CD8-positive, alpha-beta T cell (primary cell): ENCODE measurements at regions of chr10 and their contacts with region 1.

Region 1: DNA sequence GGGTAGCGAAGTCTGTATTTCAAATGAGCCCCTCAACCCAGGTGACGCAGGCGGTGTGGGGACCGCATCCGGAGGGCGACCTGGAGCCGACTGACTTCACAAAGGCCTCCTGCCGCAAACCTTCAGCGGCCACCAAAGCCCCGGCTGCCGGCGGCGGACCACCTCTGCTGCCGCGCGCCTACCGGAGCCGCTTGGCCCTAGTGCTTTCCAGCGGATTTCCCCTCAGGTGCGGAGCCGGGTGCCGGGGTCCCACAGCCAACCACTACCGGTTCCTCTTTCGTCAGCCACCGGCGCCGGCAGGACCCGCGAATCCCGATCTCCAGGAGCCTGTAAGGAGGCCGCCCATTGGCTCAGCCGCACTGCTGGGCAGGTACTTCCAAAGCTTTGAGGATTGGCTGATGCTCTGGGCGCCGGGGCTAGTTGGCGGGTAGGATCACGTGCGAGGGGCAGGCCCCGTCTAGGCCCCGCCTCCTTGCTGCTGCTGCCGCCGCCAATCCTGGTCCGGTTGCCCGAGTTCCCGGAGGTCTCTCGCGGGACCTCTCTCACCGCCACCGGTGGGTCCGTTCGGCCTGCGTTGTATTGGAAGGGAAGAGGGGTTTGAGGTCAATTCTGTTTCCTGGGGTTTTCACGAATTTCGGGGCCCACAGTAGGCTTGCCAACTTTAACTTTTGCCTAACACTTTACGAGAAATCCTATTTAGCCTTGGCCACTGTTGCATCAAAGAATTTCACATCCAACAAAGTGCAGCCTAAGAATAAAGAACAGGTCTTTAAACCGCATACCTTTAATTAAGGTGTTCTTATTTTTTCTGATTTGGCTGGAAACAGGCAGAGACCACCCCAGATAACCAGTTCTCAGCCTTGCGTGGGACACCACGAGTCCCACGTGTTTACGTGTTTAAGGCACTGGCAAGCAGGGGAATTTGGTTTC is at the start of gene GSTO2:
- DNase-seq: peak; percentile 94 to 99 (median 97)
- ATAC-seq: peak; percentile 89
- H3K4me3 ChIP-seq: peak within 1 kb of the TSS; percentile 81 to 82
- H3K4me3 Mint-ChIP-seq: peak within 1 kb of the TSS; percentile 94
- H3K27ac ChIP-seq: peak within 1 kb of the TSS; percentile 90 to 93
- H3K27ac Mint-ChIP-seq: peak within 1 kb of the TSS; percentile 96
- H3K4me1 ChIP-seq: peaks cover 26% of the 10 kb centered on the region
- H3K4me1 Mint-ChIP-seq: peaks cover 48% of the 10 kb centered on the region
- H3K27me3 ChIP-seq: no peaks in the 10 kb centered on the region
- H3K27me3 Mint-ChIP-seq: peaks cover 1% of the 10 kb centered on the region
- CTCF ChIP-seq: no peak
- total RNA-seq, gene GSTO2: 0.49 to 0.75 TPM

Region 2: DNA sequence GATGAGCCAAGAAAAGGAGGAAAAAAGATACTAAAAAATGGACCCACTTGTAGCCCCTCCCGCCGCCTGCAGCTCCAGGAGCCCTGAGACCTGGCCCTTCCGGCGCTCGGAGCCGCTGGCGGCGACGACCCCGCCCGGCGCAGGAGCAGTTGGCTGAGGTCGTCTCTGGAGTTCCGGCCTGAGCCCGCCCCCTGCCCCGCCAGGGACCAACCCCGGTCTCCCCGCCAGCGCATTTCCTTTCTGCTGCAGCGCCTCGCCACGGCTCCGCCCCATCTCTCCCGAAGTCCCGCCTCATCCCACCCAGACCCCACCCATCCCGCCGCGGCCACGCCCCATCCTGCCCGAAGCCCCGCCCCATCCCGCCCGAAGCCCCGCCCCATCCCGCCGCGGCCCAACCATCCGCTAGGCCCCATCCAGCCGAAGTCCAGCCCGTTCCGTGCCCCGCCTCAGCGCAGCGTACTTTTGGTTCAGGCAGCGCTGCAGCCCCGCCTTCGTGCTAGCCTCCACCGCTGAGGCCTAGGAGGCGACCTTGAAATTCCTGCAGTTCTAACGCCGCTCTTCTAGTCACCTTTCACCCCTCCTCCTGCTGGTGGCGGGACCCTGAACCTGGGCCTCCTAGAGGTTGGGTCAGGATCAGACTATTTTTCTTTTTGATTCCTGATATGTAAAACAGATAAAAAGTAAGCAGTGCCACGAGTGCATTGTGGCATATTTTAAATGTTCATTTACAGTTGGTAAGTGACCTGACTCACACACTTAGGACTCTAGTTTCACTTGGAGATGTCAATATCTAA is 350.7 kb before region 1 on chr10 and contains the start of gene STN1:
- CTCF ChIA-PET with region 1: no interaction called
- POLR2A ChIA-PET with region 1: no interaction called
- intact Hi-C with region 1: loop called in 1 of 2 experiments (anchors 1 kb)
- DNase-seq: peak; percentile 85 to 98 (median 95)
- ATAC-seq: peak; percentile 92
- H3K4me3 ChIP-seq: peak within 1 kb of the TSS; percentile 85 to 86
- H3K4me3 Mint-ChIP-seq: peak within 1 kb of the TSS; percentile 98
- H3K27ac ChIP-seq: peak within 1 kb of the TSS; percentile 79 to 88
- H3K27ac Mint-ChIP-seq: peak within 1 kb of the TSS; percentile 97
- H3K4me1 ChIP-seq: peaks cover 36% of the 10 kb centered on the region
- H3K4me1 Mint-ChIP-seq: peaks cover 40% of the 10 kb centered on the region
- H3K27me3 ChIP-seq: no peaks in the 10 kb centered on the region
- H3K27me3 Mint-ChIP-seq: no peaks in the 10 kb centered on the region
- CTCF ChIP-seq: no peak
- total RNA-seq, gene STN1: 14.2 to 14.8 TPM

Region 3: DNA sequence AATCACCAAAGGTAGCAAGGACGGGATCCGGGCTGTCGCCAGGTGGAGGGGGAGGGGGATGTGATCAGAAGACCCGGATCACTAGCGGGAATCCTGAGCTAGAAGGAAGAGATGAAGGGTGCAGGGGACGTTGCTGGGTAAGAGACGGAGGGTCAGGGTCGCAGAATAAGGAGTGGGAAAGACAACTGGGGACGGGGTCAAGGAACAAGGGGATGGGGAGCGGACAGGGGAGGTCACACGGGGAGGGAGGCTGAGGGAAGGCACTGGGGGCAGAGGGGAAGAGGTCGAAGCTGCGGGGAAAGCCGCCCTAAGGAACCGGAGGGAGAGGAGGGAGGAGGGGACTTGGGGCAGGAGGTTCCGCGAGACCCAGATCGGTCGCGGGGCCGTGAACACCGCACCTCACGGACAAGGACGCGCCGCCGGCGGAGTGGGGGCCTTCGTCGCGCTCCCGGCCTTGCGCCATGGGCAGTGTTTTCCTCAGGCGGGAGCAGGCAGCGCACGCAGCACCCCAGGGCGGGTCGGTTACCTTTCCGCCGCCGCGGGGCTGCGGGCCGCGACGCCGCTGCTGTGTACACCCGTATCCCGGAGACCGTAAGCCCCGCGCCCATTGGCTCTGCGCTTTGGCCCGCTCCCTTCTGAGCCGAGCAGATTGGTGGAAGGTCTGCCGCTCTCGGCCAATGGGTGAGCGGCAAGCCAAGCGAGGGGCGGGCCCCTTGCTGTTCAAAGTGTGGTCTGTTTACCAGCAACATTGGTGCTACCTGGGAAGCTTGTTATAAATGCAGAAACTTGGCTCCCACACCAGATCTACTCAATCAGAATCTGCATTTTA is 37.0 kb before region 1 on chr10 and contains the start of gene CFAP43:
- CTCF ChIA-PET with region 1: interaction called, 11 read pairs
- POLR2A ChIA-PET with region 1: interaction called, 4 read pairs
- intact Hi-C with region 1: loop called (anchors 1 kb)
- DNase-seq: peak; percentile 98 to 100 (median 99)
- ATAC-seq: peak; percentile 99
- H3K4me3 ChIP-seq: peak within 1 kb of the TSS; percentile 64 to 67
- H3K4me3 Mint-ChIP-seq: peak within 1 kb of the TSS; percentile 87
- H3K27ac ChIP-seq: peak within 1 kb of the TSS in 1 of 2 experiments; percentile 52
- H3K27ac Mint-ChIP-seq: peak within 1 kb of the TSS; percentile 79
- H3K4me1 ChIP-seq: peaks cover 4% of the 10 kb centered on the region
- H3K4me1 Mint-ChIP-seq: peaks cover 10% of the 10 kb centered on the region
- H3K27me3 ChIP-seq: peaks cover 0 to 10% of the 10 kb centered on the region in 2 experiments
- H3K27me3 Mint-ChIP-seq: peaks cover 9% of the 10 kb centered on the region
- CTCF ChIP-seq: no peak
- total RNA-seq, gene CFAP43: not detected

Region 4: DNA sequence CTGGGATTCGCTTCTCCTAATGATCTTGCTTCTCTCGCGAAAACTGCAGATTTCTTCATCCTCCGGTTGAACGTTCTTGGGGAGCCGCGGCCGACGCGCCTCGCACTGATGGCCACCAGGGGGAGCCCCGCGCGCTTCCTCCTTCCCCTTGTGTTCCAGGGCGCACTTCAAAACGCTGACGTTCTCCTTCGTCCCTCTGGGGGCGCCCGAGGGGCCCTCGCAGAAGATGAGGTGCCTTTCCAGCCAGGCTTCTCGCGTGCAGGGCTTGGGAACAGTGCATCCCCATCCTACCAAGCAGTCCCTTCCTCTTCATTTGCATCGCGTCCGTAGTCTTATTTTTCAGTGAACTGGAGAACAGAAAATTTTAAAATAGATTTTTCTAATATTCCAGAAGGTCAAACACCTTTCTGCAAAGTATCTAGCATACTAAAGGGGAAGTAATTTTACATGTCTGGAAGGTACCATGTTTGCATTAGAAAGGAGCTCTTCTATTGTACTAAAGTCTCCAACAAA is 22.5 kb after region 1 on chr10:
- CTCF ChIA-PET with region 1: interaction called, 109 read pairs
- POLR2A ChIA-PET with region 1: interaction called, 4 read pairs
- intact Hi-C with region 1: loop called in 1 of 2 experiments (anchors 1 kb)
- DNase-seq: peak; percentile 80 to 93 (median 89)
- ATAC-seq: peak; percentile 100
- H3K4me3 ChIP-seq: no peak overlapping the region
- H3K4me3 Mint-ChIP-seq: no peak overlapping the region
- H3K27ac ChIP-seq: no peak overlapping the region
- H3K27ac Mint-ChIP-seq: no peak overlapping the region
- H3K4me1 ChIP-seq: peaks cover 3% of the 10 kb centered on the region
- H3K4me1 Mint-ChIP-seq: peaks cover 5% of the 10 kb centered on the region
- H3K27me3 ChIP-seq: no peaks in the 10 kb centered on the region
- H3K27me3 Mint-ChIP-seq: peaks cover 20% of the 10 kb centered on the region
- CTCF ChIP-seq: peak; percentile 99

Region 5: GRCh38 chr10:104337974-104338735 is 69.2 kb after region 1 on chr10 and contains the start of gene ITPRIP:
- CTCF ChIA-PET with region 1: interaction called, 15 read pairs
- POLR2A ChIA-PET with region 1: interaction called, 14 read pairs
- intact Hi-C with region 1: loop called (anchors 1 kb)
- DNase-seq: peak; percentile 47 to 89 (median 76)
- ATAC-seq: peak; percentile 67
- H3K4me3 ChIP-seq: peak within 1 kb of the TSS; percentile 92 to 98
- H3K4me3 Mint-ChIP-seq: peak within 1 kb of the TSS; percentile 93
- H3K27ac ChIP-seq: peak within 1 kb of the TSS; percentile 92 to 93
- H3K27ac Mint-ChIP-seq: peak within 1 kb of the TSS; percentile 97
- H3K4me1 ChIP-seq: peaks cover 46% of the 10 kb centered on the region
- H3K4me1 Mint-ChIP-seq: peaks cover 54% of the 10 kb centered on the region
- H3K27me3 ChIP-seq: no peaks in the 10 kb centered on the region
- H3K27me3 Mint-ChIP-seq: no peaks in the 10 kb centered on the region
- CTCF ChIP-seq: no peak
- total RNA-seq, gene ITPRIP: 212 to 214 TPM

Region 6: GRCh38 chr10:105950410-105950809 is 1681.4 kb after region 1 on chr10:
- CTCF ChIA-PET with region 1: no interaction called
- POLR2A ChIA-PET with region 1: no interaction called
- intact Hi-C with region 1: no loop called
- DNase-seq: peak in 2 of 9 experiments; percentile 7 to 9
- ATAC-seq: no peak
- H3K4me3 ChIP-seq: no peak overlapping the region
- H3K4me3 Mint-ChIP-seq: no peak overlapping the region
- H3K27ac ChIP-seq: no peak overlapping the region
- H3K27ac Mint-ChIP-seq: no peak overlapping the region
- H3K4me1 ChIP-seq: no peaks in the 10 kb centered on the region
- H3K4me1 Mint-ChIP-seq: no peaks in the 10 kb centered on the region
- H3K27me3 ChIP-seq: no peaks in the 10 kb centered on the region
- H3K27me3 Mint-ChIP-seq: no peaks in the 10 kb centered on the region
- CTCF ChIP-seq: peak; percentile 35